HEK293 (cell line): ENCODE measurements at regions of chr2 and their contacts with region 1.

Region 1: DNA sequence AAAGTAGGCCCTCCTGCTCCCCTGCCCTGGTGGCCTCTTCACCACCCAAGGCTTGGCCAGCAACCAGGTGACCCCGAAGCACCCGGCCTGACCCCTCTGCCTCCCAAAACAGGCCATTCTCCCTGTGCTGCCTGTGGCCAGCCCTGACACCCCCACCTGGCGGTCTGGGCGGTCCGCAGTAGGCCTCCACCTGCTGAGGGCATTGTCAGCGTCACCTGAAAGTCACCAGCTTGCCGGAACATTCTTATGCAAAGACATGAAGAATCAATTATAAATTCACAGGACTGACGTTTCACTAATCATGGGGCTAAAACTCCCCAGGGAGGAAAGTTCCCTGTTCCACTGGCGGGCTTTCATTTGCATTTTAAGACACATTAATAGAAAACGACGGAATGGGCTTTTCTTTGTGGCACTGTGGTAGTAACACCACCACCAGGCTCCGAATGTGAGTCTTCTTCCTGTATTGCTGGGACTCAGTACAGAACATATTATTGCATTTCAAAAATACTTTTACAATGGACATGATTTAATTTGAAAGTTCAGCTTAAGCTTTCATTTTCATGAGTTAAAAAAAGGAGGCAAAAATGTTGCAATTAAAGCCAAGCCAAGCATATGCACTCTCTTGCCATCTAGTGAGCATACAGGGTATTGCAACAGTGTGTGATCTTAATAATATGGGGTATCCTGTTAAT is 57.4 kb downstream of the ADI1 start:
- H3K4me3 ChIP-seq: no peak overlapping the region
- H3K27ac ChIP-seq: no peak overlapping the region
- H3K4me1 ChIP-seq: no peaks in the 10 kb centered on the region
- CTCF ChIP-seq: 0 out of 2 replicates have a peak, but pooled peaks have one; percentile 24

Region 2: DNA sequence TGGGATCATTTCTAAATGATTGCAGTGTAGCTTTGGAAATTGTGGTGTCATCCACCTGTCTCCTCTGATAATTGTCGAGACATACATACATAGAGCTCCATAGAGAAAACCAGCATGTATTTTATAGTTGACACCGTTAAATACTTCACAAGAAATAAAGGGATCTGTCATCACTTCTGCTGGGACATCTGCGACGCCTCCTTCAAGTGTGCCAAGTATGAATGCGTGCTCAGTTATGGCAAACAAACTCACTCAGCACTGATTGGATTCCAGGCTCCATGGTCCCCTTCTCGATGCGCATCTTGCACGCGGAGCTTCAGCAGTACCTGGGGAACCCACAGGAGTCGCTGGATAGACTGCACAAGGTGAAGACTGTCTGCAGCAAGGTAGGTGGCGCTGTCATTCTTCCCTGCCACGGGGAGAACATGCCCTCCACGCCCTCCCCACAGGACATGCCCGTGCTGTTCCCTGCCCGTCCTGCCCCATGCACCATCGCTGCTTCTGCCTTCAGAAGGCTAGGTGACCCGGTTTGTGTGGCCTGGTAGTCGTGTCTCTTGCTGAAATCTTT is 18.4 kb before region 1 on chr2:
- CTCF ChIA-PET with region 1: interaction called, 14 read pairs
- POLR2A ChIA-PET with region 1: no interaction called
- H3K4me3 ChIP-seq: no peak overlapping the region
- H3K27ac ChIP-seq: no peak overlapping the region
- H3K4me1 ChIP-seq: no peaks in the 10 kb centered on the region
- CTCF ChIP-seq: no peak